ENCODE measurements at regions of chr7 and their contacts with region 1.

Region 1: GRCh38 chr7:124784879-124785818 is 19.6 kb upstream of the GPR37 start:
- DNase-seq: peak; percentile 55

Region 2: DNA sequence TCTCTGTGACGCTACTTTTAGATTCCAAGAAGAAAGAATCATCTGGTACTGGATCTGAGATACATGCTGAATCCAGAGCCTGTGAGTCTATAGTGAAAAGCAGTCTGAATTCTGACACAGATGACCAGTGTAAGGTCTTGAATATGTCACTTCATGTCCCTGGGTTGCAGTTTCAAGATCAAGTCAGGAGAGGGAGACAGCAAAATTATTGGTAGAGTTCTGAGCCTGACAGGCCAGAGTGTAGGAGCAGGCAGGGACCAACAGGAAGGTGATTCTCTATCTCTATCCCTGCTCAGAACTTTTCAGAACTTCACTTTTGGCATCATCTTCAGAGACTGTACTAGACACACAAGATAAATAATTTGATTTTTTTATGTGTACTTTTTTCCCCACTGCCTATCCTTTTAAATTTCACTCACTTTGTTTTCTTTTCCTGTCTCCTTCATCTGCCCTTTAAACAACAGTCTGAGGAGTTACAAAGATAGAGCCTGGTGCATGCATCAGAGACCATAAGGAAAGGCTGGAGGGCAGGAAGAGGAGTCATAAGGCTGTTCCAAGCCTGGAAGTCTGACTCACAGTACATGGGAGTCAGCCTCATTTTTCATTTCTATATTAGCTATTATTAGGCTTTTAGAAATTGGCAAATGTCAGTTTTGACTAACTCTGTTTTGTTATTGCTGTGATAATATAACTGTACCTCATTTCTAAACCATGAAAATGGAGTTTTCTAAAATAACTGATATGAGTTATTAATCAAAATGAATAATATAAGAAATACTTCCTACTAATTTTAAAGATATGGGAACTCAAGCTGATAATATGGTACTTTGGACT is 632.1 kb before region 1 on chr7:
- in situ Hi-C with region 1: loop called (anchors 25 kb)
- DNase-seq: peak; percentile 32

Region 3: GRCh38 chr7:125218076-125218475 is 432.9 kb after region 1 on chr7:
- in situ Hi-C with region 1: no loop called
- DNase-seq: peak; percentile 37

Measured in KBM-7 (cell line).